BJ (cell line): ENCODE measurements at regions of chr3 and their contacts with region 1.

Region 1: GRCh38 chr3:124063197-124063909 is 71.4 kb upstream of the ROPN1 start:
- DNase-seq: no peak
- H3K4me3 ChIP-seq: no peak overlapping the region
- H3K27me3 ChIP-seq: no peaks in the 10 kb centered on the region
- CTCF ChIP-seq: no peak

Region 2: GRCh38 chr3:123618768-123619484 is 444.4 kb before region 1 on chr3:
- CTCF ChIA-PET with region 1: no interaction called
- POLR2A ChIA-PET with region 1: no interaction called
- DNase-seq: peak; percentile 23
- H3K4me3 ChIP-seq: no peak overlapping the region
- H3K27me3 ChIP-seq: no peaks in the 10 kb centered on the region
- CTCF ChIP-seq: no peak

Region 3: DNA sequence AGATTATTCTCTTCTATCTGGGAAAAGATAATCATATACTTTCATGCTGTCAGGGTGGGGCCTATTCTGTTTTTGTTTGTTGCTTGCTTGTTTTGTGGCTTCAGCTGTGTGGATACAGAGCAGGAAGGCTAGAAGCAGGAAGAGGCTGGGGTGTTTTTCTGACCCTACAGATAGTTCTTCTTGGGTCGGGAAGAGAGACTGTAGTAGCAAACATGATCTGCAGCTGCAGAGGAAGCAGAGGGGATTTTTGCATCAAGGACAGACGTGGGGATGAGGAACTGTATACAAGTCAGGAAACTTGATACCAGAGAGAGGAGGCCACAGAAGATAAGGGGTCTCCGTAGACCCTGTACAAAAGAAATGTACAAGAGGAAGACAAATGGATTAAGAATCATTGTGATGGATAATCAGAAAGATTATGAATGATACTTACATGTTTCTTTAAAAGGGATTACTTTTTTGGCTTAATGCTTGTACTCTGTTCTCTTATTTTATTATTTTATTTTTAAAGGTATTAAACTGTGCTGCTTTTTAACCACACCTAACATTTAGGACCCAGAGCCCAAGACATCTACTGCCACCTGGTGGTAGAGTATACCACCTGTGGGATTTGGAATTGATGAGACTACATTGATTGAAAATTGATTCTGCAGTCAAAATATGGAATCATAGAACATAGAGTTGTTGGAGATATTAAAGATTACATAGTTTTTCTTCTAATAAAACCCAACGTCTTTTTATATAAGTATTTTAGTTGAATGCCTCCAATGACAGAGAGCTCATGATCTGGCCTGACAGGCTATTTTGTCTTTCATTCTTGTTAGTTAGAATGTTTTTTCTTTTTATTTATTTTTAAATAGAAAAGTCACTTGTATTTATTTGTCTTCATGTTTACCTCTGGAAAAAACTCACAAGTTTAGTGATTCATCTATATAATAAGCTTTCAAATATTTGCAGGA is 15.9 kb after region 1 on chr3:
- CTCF ChIA-PET with region 1: interaction called, 12 read pairs
- POLR2A ChIA-PET with region 1: no interaction called
- DNase-seq: no peak
- H3K4me3 ChIP-seq: no peak overlapping the region
- H3K27me3 ChIP-seq: no peaks in the 10 kb centered on the region; the same call in 1 of the 2 replicates
- CTCF ChIP-seq: peak; percentile 74